Naive thymus-derived CD4-positive, alpha-beta T cell (primary cell): ENCODE measurements at regions of chr10 and their contacts with region 1.

Region 1: DNA sequence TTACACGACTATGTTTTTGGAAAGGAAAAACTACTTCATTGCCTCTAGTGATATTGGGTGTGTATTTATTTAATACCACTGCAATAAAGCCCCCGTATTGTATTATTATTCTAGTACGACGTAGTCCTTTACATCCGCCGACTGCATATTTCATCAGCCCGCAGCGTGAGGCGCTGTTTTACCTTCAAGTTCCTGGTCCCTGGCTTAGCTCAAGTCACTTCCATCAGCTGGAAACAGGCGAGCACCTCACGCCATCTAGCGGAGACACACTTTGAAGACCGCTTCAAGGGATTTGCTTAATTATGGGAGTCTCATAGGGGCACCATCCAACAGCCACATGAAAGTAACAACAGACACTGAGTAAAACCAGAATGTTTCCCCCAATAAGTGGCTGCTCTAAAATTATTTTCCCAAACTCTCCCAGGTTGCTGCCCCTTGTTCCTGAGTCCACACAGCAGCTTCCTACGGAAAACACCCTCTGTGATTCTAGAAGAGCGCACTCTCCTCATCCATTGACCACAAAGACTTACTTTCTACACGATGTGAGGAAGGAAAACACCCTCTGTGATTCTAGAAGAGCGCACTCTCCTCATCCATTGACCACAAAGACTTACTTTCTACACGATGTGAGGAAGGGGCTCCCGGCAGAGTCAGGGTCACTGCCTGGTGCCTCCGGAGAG is 15.7 kb upstream of the ITIH2 start:
- DNase-seq: peak; percentile 30 to 82 (median 76)
- ATAC-seq: peak; percentile 96
- H3K4me3 ChIP-seq: no peak overlapping the region
- H3K4me3 Mint-ChIP-seq: peak overlapping the region in 1 of 10 donors; percentile 67
- H3K27ac ChIP-seq: no peak overlapping the region
- H3K27ac Mint-ChIP-seq: peak overlapping the region in 2 of 9 donors; percentile 15 to 28
- H3K4me1 ChIP-seq: no peaks in the 10 kb centered on the region
- H3K4me1 Mint-ChIP-seq: peaks cover 0 to 14% (median 4%) of the 10 kb centered on the region in 7 donors
- H3K27me3 ChIP-seq: no peaks in the 10 kb centered on the region
- H3K27me3 Mint-ChIP-seq: peaks cover 0 to 24% (median 0%) of the 10 kb centered on the region in 5 donors

Region 2: GRCh38 chr10:6416892-6417512 is 1270.4 kb before region 1 on chr10:
- CTCF ChIA-PET with region 1: no interaction called
- POLR2A ChIA-PET with region 1: no interaction called
- intact Hi-C with region 1: loop called in 1 of 2 experiments (anchors 2 kb)
- DNase-seq: peak in 7 of 9 donors; percentile 36 to 59 (median 43)
- ATAC-seq: peak; percentile 88
- H3K4me3 ChIP-seq: no peak overlapping the region
- H3K4me3 Mint-ChIP-seq: no peak overlapping the region
- H3K27ac ChIP-seq: no peak overlapping the region
- H3K27ac Mint-ChIP-seq: no peak overlapping the region
- H3K4me1 ChIP-seq: no peaks in the 10 kb centered on the region
- H3K4me1 Mint-ChIP-seq: peaks cover 0 to 6% (median 0%) of the 10 kb centered on the region in 7 donors
- H3K27me3 ChIP-seq: no peaks in the 10 kb centered on the region
- H3K27me3 Mint-ChIP-seq: no peaks in the 10 kb centered on the region

Region 3: DNA sequence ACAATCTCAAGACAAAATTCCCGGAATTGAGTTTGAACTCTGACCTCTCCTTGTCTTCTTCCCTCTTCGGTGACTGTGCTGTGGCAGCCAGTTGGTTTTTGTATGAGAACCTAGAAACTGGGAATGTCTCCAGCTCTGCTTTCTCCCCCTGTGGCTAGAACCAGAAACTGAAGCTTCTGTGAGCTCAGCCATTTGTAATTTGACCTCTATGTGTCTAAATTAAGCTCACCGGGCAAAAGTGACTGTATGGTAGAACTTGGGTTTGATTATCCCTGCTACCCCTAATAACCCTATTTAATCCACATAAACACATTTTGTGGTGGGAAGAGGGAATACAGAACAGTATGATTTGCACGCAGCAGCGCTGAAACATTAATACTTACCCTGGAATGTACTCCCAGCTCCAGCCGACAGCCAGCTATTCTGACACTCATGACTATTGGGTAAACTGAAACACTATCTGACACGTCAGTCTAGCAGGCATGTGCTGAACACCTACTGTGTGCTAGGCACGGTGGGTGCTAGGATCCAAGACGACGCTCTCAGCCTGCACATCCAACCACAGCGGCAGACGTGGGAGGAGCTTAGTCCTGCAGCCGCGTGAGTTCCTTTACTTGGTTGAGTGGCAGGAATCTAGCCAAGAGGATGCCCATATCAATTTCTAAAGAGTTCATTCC is 601.3 kb before region 1 on chr10:
- CTCF ChIA-PET with region 1: no interaction called
- POLR2A ChIA-PET with region 1: no interaction called
- intact Hi-C with region 1: no loop called
- DNase-seq: no peak
- ATAC-seq: no peak
- H3K4me3 ChIP-seq: no peak overlapping the region
- H3K4me3 Mint-ChIP-seq: no peak overlapping the region
- H3K27ac ChIP-seq: no peak overlapping the region
- H3K27ac Mint-ChIP-seq: no peak overlapping the region
- H3K4me1 ChIP-seq: no peaks in the 10 kb centered on the region
- H3K4me1 Mint-ChIP-seq: peaks cover 0 to 3% (median 0%) of the 10 kb centered on the region in 7 donors
- H3K27me3 ChIP-seq: no peaks in the 10 kb centered on the region
- H3K27me3 Mint-ChIP-seq: peaks cover 3 to 48% (median 12%) of the 10 kb centered on the region in 5 donors

Region 4: DNA sequence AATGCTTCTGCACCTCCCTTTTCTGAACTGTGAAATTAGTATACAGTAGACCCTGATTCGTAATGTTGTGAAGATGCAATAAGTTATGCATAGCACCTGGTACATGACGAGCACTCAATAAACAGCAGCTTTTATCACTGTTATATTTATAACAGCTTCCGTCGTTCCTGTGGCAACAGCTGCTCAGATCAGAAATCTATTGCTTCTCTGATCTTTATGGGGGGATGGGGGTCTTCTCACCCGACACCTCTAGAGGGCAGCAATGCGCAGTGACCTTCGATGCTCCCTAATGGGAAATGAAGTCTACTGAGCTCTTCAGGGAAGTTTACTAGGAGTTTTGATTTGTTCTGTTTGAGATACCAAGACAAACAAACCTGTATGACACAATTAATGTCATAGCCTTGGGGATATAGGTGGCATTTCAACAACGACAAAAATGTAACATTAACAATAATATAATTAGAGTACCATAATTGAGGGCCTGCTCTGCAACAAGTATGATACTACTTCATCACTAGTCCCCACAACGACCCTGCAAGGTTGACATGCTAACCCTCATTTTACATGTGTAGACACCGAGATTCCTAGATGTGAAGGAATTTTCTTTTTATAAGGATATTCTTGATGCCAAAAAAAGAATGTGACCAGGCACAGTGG is 566.1 kb before region 1 on chr10:
- CTCF ChIA-PET with region 1: interaction called, 4 read pairs
- POLR2A ChIA-PET with region 1: no interaction called
- intact Hi-C with region 1: loop called in 1 of 2 experiments (anchors 1 kb)
- DNase-seq: peak; percentile 54 to 86 (median 79)
- ATAC-seq: peak; percentile 97
- H3K4me3 ChIP-seq: no peak overlapping the region
- H3K4me3 Mint-ChIP-seq: peak overlapping the region in 1 of 10 donors; percentile 42
- H3K27ac ChIP-seq: no peak overlapping the region
- H3K27ac Mint-ChIP-seq: peak overlapping the region; percentile 36 to 97 (median 85)
- H3K4me1 ChIP-seq: no peaks in the 10 kb centered on the region
- H3K4me1 Mint-ChIP-seq: peaks cover 6 to 13% (median 8%) of the 10 kb centered on the region in 7 donors
- H3K27me3 ChIP-seq: no peaks in the 10 kb centered on the region
- H3K27me3 Mint-ChIP-seq: peaks cover 0 to 44% (median 0%) of the 10 kb centered on the region in 5 donors

Region 5: DNA sequence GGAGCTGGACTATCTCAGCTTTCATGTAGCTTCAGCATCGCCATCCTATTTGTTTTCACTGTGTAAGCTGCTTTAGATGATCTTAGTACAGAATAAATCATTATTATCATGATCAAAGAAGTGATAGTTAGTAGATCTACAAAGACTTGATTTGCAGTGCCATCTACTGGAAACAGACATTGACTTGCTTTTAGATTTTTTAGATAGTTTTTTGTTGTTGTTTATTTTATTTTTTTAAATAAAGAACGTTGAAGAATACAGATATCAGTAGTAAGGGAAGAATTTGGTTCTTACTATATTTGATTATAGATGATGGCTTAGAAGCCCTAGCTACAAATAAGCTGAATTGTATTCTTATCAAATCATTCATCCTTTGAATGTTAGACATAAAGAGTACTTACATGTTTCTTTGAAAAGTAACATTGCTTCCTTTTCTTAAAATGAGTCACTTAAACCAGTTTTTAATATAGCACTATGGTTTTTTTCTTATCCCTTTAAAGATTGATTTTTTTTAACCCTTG is 270.2 kb before region 1 on chr10:
- CTCF ChIA-PET with region 1: interaction called, 7 read pairs
- POLR2A ChIA-PET with region 1: no interaction called
- intact Hi-C with region 1: loop called (anchors 2 to 10 kb)
- DNase-seq: peak in 7 of 9 donors; percentile 36 to 62 (median 46)
- ATAC-seq: peak; percentile 69
- H3K4me3 ChIP-seq: no peak overlapping the region
- H3K4me3 Mint-ChIP-seq: no peak overlapping the region
- H3K27ac ChIP-seq: no peak overlapping the region
- H3K27ac Mint-ChIP-seq: peak overlapping the region in 3 of 9 donors; percentile 27 to 79 (median 29)
- H3K4me1 ChIP-seq: peaks cover 5 to 10% of the 10 kb centered on the region in 2 donors
- H3K4me1 Mint-ChIP-seq: peaks cover 8 to 35% (median 25%) of the 10 kb centered on the region in 7 donors
- H3K27me3 ChIP-seq: no peaks in the 10 kb centered on the region
- H3K27me3 Mint-ChIP-seq: peaks cover 0 to 33% (median 0%) of the 10 kb centered on the region in 5 donors

Region 6: DNA sequence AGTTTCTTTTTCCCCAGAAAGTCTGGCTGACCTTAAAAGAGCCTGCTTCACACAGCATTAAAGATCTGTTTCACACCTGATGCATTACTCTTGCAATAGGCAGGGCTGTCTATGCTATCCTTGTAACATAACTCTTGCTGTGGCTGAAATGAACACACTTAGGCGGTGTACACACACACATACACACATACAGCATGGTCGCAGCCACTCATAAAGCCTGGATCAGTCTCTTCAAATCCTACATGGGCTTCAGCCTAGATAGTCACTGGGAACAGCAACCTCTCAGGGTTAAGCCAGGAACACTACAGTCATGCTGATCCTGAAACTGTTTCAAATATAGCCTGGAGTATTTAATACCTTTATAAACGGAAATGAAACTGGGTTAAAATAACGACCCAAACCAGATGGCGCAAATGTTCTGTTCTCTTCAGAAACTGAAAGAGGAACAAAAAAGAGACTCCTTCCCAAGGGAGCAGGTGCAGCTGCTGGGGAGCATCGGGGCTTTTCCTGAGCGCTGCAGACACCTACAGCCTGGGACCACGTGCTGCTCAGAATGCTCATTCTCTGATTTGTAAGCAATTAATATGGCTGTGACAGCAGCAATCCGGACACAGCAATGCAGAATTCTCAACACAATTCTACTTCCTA is 215.5 kb before region 1 on chr10:
- CTCF ChIA-PET with region 1: no interaction called
- POLR2A ChIA-PET with region 1: no interaction called
- intact Hi-C with region 1: loop called in 1 of 2 experiments (anchors 1 kb)
- DNase-seq: peak in 4 of 9 donors; percentile 6 to 19 (median 10)
- ATAC-seq: peak; percentile 72
- H3K4me3 ChIP-seq: peak overlapping the region; percentile 62
- H3K4me3 Mint-ChIP-seq: peak overlapping the region; percentile 73 to 93 (median 88)
- H3K27ac ChIP-seq: peak overlapping the region; percentile 51
- H3K27ac Mint-ChIP-seq: peak overlapping the region in 8 of 9 donors; percentile 72 to 91 (median 85)
- H3K4me1 ChIP-seq: peaks cover 10 to 19% of the 10 kb centered on the region in 2 donors
- H3K4me1 Mint-ChIP-seq: peaks cover 23 to 55% (median 36%) of the 10 kb centered on the region in 7 donors
- H3K27me3 ChIP-seq: no peaks in the 10 kb centered on the region
- H3K27me3 Mint-ChIP-seq: peaks cover 0 to 2% (median 0%) of the 10 kb centered on the region in 5 donors

Region 7: DNA sequence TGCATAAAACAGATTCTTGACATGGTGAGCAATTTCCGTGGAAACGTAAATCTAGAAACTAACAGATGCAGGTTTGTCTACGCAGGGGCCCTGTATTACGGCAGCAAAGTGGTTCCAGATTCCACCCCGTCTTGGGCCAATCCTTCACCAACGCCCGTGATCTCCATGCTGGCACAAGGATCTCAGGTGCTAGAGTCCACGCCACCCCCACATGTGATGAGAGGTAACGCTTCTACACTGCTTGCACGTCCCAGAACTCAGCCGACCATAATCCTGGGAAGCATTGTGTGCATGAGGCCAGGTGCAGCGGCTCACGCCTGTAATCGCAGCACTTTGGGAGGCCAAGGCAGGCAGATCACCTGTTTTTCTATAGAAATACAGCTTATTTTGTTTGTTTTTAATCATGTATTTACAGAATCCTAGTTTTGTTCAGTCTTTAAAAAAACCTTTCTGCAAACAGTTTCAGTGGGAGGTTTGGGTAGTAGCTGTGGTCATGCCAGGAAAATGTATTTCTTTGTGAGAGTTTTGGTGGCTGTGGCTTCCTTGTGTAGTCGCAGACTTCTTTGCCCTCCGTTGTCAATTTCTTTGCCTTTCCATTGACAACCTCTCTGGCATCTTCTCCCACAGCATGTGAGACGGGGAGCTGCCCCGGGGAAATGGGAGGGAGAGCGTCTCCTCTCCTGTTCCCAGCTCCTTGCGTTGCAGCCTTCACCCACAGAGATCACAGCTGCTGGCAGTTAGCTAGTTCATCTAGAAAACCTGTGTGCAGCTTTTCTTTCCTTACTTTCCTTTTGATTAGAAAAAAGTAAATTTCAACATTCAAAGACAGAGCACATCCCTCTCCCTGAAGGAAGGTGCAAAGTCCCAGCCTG is 51.4 kb after region 1 on chr10:
- CTCF ChIA-PET with region 1: no interaction called
- POLR2A ChIA-PET with region 1: no interaction called
- intact Hi-C with region 1: no loop called
- DNase-seq: no peak
- ATAC-seq: no peak
- H3K4me3 ChIP-seq: no peak overlapping the region
- H3K4me3 Mint-ChIP-seq: no peak overlapping the region
- H3K27ac ChIP-seq: no peak overlapping the region
- H3K27ac Mint-ChIP-seq: no peak overlapping the region
- H3K4me1 ChIP-seq: no peaks in the 10 kb centered on the region
- H3K4me1 Mint-ChIP-seq: no peaks in the 10 kb centered on the region
- H3K27me3 ChIP-seq: no peaks in the 10 kb centered on the region
- H3K27me3 Mint-ChIP-seq: peaks cover 0 to under 1% (median 0%) of the 10 kb centered on the region in 5 donors

Region 8: DNA sequence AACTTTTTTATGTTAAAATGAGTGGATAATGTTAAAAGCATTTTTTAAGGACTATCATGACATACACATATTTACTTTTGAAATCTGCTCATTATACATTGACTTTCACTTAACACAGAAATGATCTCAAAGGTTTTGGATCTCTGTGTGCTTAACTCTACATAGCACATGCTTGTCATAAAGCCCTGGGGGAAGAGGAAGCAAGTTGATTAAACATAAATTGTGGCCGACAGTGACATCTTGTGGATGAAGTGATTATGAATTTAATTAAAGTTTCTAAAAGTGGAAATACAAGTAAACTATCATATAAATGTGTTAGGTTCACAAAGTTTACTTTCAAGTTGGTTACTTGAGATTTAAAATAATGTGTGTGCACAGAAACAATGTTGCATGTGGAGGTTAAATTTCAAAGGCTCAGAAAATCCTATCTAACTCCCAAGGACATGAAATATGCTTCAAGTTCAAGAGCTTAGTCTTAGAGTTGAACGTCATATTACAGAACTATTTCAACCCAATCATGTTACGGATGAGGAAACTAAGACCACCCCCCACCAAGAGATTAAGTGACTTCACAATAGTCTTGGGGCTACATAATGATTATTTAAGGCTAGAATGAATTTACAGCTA is 1614.9 kb after region 1 on chr10:
- CTCF ChIA-PET with region 1: interaction called, 3 read pairs
- POLR2A ChIA-PET with region 1: no interaction called
- intact Hi-C with region 1: loop called (anchors 1 to 10 kb)
- DNase-seq: peak in 7 of 9 donors; percentile 21 to 62 (median 53)
- ATAC-seq: peak; percentile 68
- H3K4me3 ChIP-seq: no peak overlapping the region
- H3K4me3 Mint-ChIP-seq: no peak overlapping the region
- H3K27ac ChIP-seq: no peak overlapping the region
- H3K27ac Mint-ChIP-seq: no peak overlapping the region
- H3K4me1 ChIP-seq: no peaks in the 10 kb centered on the region
- H3K4me1 Mint-ChIP-seq: peaks cover 0 to 3% (median 0%) of the 10 kb centered on the region in 7 donors
- H3K27me3 ChIP-seq: no peaks in the 10 kb centered on the region
- H3K27me3 Mint-ChIP-seq: peaks cover 0 to 10% (median 5%) of the 10 kb centered on the region in 5 donors